CD14-positive monocyte (primary cell): ENCODE measurements at regions of chr1 and their contacts with region 1.

Region 1: DNA sequence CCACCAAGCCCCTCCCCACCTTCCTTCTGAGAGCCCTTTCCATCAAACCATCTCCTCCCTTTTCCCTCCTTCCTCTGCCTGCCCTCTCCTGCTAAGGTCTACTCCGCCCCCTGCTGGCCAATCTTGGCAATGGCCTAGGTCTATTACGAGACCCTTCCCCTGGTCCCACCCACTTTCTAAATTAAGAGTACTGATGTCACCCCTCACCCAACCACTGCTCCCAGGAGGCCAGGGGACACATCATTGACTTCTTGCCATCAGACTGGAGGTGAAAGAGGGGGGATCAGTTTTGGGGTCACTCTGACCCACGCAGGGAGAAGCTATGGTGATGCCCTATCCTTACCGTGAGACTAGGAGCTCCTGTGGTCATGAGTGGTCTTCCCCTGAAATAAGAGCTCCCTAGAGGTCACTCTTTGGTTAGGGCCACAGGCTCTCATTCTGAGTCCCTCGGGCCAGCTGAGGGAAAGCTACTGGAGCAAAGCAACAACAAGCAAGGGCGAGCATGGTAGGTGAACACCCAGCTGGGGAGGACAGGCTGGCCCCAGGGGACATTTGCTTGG is 34.6 kb upstream of the S100A7 start:
- DNase-seq: peak; percentile 62 to 73 (median 69)
- H3K4me3 ChIP-seq: no peak overlapping the region
- H3K4me3 Mint-ChIP-seq: no peak overlapping the region
- H3K27ac ChIP-seq: no peak overlapping the region
- H3K27ac Mint-ChIP-seq: peak overlapping the region in 2 of 7 donors; percentile 70 to 74
- H3K4me1 ChIP-seq: peaks cover 13 to 15% of the 10 kb centered on the region in 2 donors
- H3K4me1 Mint-ChIP-seq: peaks cover 12% of the 10 kb centered on the region
- H3K27me3 ChIP-seq: no peaks in the 10 kb centered on the region
- H3K27me3 Mint-ChIP-seq: peaks cover 4 to 10% (median 8%) of the 10 kb centered on the region in 3 donors
- CTCF ChIP-seq: peak; percentile 99

Region 2: DNA sequence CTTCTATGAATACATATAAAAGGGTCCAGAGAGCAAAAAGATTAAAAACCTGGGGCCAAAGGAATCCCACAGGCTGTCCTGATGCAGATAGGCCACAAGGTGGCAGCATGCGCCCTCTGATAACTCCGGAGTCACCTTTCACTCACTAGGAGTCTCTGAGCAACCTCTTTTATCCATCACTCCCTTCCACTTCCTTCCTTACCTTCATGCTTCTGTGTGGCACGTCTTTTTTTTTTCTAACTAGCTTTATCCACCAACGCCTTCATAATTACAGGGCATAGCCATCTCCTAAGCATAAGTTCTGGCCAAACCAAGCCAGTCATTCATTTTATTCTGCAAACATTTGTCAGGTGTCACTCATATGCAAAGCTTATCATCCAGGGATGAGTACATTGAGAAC is 142.5 kb before region 1 on chr1:
- intact Hi-C with region 1: loop called (anchors 1 to 2 kb)
- DNase-seq: peak; percentile 64 to 81 (median 73)
- H3K4me3 ChIP-seq: no peak overlapping the region
- H3K4me3 Mint-ChIP-seq: no peak overlapping the region
- H3K27ac ChIP-seq: no peak overlapping the region
- H3K27ac Mint-ChIP-seq: no peak overlapping the region
- H3K4me1 ChIP-seq: peaks cover 37 to 45% of the 10 kb centered on the region in 2 donors
- H3K4me1 Mint-ChIP-seq: peaks cover 41% of the 10 kb centered on the region
- H3K27me3 ChIP-seq: no peaks in the 10 kb centered on the region
- H3K27me3 Mint-ChIP-seq: peaks cover 6 to 9% (median 8%) of the 10 kb centered on the region in 3 donors
- CTCF ChIP-seq: peak; percentile 97

Region 3: DNA sequence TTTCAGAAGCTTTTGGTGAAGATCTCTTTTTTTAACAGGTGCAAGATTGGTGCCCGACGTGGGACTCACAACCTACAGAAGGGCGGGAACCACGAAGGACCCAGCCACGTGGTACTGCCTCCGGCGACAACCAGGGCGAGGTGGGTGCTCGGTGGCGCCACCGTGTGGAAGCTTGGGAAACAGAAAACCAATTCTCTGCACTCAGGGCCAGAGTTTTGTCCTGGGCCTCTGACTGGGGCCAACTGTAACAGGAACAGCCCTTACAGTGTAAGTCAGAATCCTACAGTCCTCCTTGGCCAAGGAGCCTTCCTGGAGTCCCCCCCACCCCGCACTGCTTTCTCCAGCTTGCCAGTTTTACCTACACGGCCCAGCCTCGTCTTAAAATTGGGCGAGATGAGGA is 90.3 kb before region 1 on chr1:
- intact Hi-C with region 1: loop called in 1 of 2 experiments (anchors 5 kb)
- DNase-seq: peak; percentile 68 to 79 (median 72)
- H3K4me3 ChIP-seq: no peak overlapping the region
- H3K4me3 Mint-ChIP-seq: peak overlapping the region in 1 of 2 donors; percentile 30
- H3K27ac ChIP-seq: no peak overlapping the region
- H3K27ac Mint-ChIP-seq: peak overlapping the region in 5 of 7 donors; percentile 8 to 67 (median 44)
- H3K4me1 ChIP-seq: peaks cover 39 to 42% of the 10 kb centered on the region in 2 donors
- H3K4me1 Mint-ChIP-seq: peaks cover 46% of the 10 kb centered on the region
- H3K27me3 ChIP-seq: no peaks in the 10 kb centered on the region
- H3K27me3 Mint-ChIP-seq: peaks cover 14 to 21% (median 20%) of the 10 kb centered on the region in 3 donors
- CTCF ChIP-seq: peak; percentile 86

Region 4: DNA sequence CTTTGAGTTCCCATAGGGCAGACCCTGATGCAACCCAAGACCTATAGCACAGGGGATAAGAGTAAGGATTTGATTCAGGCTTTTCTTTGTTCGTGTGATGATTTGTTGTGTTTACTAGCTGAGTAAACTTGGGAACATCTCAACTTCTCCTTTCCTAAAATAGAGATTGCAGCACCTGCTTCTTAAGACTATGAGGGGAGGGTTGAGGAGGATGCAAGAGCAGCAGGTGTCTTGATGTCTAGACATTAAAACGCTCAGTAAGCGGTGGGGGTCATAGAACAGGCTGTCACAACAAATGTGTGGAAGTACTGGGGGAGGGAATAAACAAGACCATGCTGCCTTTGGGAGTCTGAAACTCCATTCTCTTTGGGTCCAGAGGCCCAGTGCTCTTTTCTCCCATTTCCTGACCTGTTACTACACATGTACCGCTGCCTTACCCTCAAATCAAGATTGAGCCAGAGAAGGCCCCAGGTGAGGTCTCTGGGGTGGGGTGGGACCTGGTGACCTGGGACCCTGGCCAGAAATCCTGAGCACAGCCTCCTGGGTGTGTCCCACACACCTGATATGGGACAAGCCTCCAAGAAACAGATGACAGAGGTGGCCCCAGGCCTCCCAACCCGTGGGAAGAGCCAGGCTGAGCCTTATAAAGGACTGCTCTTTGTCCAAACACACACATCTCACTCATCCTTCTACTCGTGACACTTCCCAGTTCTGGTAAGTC is 79.0 kb before region 1 on chr1 and contains the start of gene S100A7A:
- intact Hi-C with region 1: loop called in 1 of 2 experiments (anchors 10 kb)
- DNase-seq: no peak
- H3K4me3 ChIP-seq: no peak within 1 kb of the TSS
- H3K4me3 Mint-ChIP-seq: no peak within 1 kb of the TSS
- H3K27ac ChIP-seq: no peak within 1 kb of the TSS
- H3K27ac Mint-ChIP-seq: no peak within 1 kb of the TSS
- H3K4me1 ChIP-seq: peaks cover 0 to 15% of the 10 kb centered on the region in 2 donors
- H3K4me1 Mint-ChIP-seq: peaks cover 16% of the 10 kb centered on the region
- H3K27me3 ChIP-seq: peaks cover 0 to 3% of the 10 kb centered on the region in 2 donors
- H3K27me3 Mint-ChIP-seq: peaks cover 20 to 25% (median 23%) of the 10 kb centered on the region in 3 donors
- CTCF ChIP-seq: no peak
- polyA plus RNA-seq, gene S100A7A: not detected